Dorsolateral prefrontal cortex (tissue), 120 donors: ENCODE measurements at regions of chr1 and their contacts with region 1.

Region 1: GRCh38 chr1:27284425-27285273 is 37.3 kb upstream of the TMEM222 start:
- DNase-seq: peak; percentile 64 to 95 (median 84)
- H3K4me3 ChIP-seq: no peak overlapping the region
- H3K27ac ChIP-seq: peak overlapping the region in 8 of 59 donors; percentile 0 to 52 (median 12)
- H3K27me3 ChIP-seq: no peaks in the 10 kb centered on the region
- CTCF ChIP-seq: peak; percentile 62 to 96 (median 90)

Region 2: GRCh38 chr1:27102707-27103491 is 181.8 kb before region 1 on chr1:
- intact Hi-C with region 1: loop called (anchors 1 kb)
- DNase-seq: peak; percentile 75 to 92 (median 87)
- H3K4me3 ChIP-seq: peak overlapping the region in 3 of 59 donors; percentile 0 to 44 (median 3)
- H3K27ac ChIP-seq: peak overlapping the region in 25 of 59 donors; percentile 7 to 67 (median 49)
- H3K27me3 ChIP-seq: no peaks in the 10 kb centered on the region
- CTCF ChIP-seq: peak in 55 of 56 donors; percentile 77 to 100 (median 98)

Region 3: DNA sequence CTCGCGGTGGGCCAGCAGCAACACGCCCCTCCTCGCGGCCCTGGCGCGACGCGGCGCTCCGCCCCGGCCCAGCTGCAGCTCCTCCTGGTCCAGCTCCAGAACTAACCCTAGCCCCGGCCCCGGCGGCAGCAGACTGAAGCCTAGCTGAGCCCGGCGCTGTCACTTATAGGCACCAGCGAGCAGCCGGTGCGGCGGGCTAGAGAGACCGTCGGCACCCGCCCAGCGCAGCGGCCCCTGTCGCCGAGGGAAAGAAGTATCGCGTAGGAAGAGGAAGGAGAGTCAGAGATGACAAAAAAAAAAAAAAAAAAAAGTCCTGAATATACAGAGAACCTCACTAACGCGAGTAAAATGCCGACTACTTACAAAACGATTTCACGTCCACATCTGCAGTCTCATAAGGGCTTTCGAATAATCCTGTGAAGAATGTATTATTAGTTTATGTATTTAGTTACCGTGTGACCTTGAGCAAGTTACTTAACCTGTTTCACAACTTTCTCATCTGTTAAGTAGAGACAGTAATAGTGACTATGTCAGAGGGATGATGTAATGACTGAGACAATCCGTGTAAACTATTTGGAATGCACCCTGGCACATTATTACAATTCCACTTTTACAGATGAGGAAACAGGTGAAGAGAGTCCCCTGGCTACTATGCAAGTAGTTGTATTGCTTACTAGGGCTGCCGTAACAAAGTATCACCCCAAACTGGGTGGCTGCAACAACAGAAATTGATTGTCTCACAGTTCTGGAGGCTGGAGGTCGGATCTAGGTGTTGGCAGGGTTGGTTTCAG is 129.5 kb before region 1 on chr1 and contains the start of gene SLC9A1:
- intact Hi-C with region 1: no loop called
- DNase-seq: peak; percentile 92 to 97 (median 96)
- H3K4me3 ChIP-seq: peak within 1 kb of the TSS; percentile 52 to 91 (median 79)
- H3K27ac ChIP-seq: peak within 1 kb of the TSS; percentile 58 to 97 (median 87)
- H3K27me3 ChIP-seq: no peaks in the 10 kb centered on the region
- CTCF ChIP-seq: peak; percentile 39 to 94 (median 86)
- total RNA-seq, gene SLC9A1: 16.2 to 58.9 (median 38.4) TPM

Region 4: GRCh38 chr1:27192039-27192529 is 92.6 kb before region 1 on chr1:
- intact Hi-C with region 1: loop called (anchors 5 to 10 kb)
- DNase-seq: no peak
- H3K4me3 ChIP-seq: no peak overlapping the region
- H3K27ac ChIP-seq: no peak overlapping the region
- H3K27me3 ChIP-seq: no peaks in the 10 kb centered on the region
- CTCF ChIP-seq: no peak

Region 5: GRCh38 chr1:27349784-27350662 is 65.4 kb after region 1 on chr1:
- intact Hi-C with region 1: no loop called
- DNase-seq: peak in 6 of 10 donors; percentile 24 to 65 (median 51)
- H3K4me3 ChIP-seq: peak overlapping the region; percentile 1 to 69 (median 49)
- H3K27ac ChIP-seq: peak overlapping the region in 2 of 59 donors; percentile 28 to 57
- H3K27me3 ChIP-seq: peaks cover 0 to 22% (median 4%) of the 10 kb centered on the region in 45 donors
- CTCF ChIP-seq: no peak